A673 (cell line): ENCODE measurements at regions of chr10 and their contacts with region 1.

Region 1: DNA sequence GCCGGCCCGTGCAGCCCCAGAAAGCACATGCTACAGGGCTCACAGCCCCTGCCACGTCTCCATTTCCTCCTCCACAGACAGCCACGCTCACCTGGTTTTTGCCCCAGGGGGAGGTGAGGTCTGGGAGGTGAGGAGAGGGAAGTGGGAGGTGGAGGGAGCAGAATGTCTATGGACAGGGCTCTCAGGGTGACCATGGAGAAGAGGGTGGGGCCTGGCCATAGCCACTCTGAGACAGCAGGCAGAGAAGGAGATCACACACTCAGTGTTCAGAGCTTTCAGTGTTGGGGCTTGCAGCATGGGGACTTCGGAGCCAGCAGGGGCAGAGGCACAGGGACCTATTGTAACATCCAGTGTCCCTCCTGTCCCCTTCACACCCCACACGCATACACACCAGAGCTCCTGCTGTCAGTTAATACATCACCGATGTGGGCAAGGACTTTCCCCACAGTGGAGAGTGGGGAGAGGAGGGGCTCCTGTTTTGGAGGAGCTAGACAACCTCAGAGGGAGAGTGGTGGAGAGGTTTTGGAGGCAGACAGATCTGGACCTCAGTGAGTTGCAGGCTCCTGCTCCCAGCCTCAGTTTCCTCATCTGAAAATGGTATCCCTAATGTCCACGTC is 14.4 kb downstream of the WDFY4 start:
- DNase-seq: no peak
- H3K4me3 ChIP-seq: no peak overlapping the region
- H3K27ac ChIP-seq: no peak overlapping the region
- H3K4me1 ChIP-seq: no peaks in the 10 kb centered on the region
- H3K27me3 ChIP-seq: peaks cover 18% of the 10 kb centered on the region
- CTCF ChIP-seq: no peak

Region 2: GRCh38 chr10:47008769-47009168 is 1690.3 kb before region 1 on chr10:
- CTCF ChIA-PET with region 1: no interaction called
- POLR2A ChIA-PET with region 1: no interaction called
- intact Hi-C with region 1: no loop called
- DNase-seq: no peak
- H3K4me3 ChIP-seq: no peak overlapping the region
- H3K27ac ChIP-seq: no peak overlapping the region
- H3K4me1 ChIP-seq: no peaks in the 10 kb centered on the region
- H3K27me3 ChIP-seq: peaks cover 17% of the 10 kb centered on the region
- CTCF ChIP-seq: no peak

Region 3: GRCh38 chr10:47402641-47403301 is 1296.3 kb before region 1 on chr10:
- CTCF ChIA-PET with region 1: no interaction called
- POLR2A ChIA-PET with region 1: no interaction called
- intact Hi-C with region 1: no loop called
- DNase-seq: peak; percentile 52
- H3K4me3 ChIP-seq: no peak overlapping the region
- H3K27ac ChIP-seq: no peak overlapping the region
- H3K4me1 ChIP-seq: no peaks in the 10 kb centered on the region
- H3K27me3 ChIP-seq: no peaks in the 10 kb centered on the region
- CTCF ChIP-seq: no peak

Region 4: DNA sequence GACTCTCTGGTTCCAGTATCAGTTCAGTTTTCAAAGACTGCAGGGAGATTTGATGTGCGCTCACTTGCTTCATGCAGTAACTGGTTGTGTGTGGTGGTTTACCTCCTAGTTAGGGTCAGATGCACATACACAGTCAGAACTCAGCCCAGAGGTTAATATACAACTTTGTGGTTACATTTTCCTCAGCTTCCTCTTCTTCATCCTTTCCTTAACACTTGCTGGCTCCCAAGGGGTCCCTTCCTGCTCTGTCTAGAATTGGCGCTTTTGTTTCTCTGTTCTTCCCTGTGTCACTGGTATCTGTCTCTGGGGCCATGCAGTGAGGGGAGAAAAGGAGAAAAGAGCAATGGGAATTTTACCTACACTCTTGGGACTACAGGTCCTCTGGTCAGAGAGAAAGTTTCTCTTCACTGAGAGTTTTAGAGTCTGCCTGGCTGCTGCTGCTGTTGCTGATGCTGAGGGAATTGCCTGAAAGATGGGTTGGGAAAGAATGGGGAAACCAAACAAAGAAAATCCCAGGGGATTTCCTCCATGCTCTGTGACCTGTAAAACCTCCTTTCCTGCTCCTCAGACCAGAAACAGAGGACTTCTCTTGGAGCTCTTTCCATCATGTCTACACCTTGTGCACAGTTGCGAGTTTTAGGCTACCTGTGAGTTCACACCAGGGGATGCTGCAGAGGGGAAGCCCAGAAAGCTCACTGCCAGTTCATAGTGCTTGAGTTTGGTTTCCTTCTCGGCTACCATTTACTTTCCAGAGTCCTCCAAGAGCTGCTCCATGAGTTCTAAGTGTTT is 60.2 kb after region 1 on chr10:
- CTCF ChIA-PET with region 1: no interaction called
- POLR2A ChIA-PET with region 1: no interaction called
- intact Hi-C with region 1: loop called (anchors 10 kb)
- DNase-seq: no peak
- H3K4me3 ChIP-seq: no peak overlapping the region
- H3K27ac ChIP-seq: no peak overlapping the region
- H3K4me1 ChIP-seq: no peaks in the 10 kb centered on the region
- H3K27me3 ChIP-seq: peaks cover 28% of the 10 kb centered on the region
- CTCF ChIP-seq: no peak